T-cell (primary cell): ENCODE measurements at regions of chr16 and their contacts with region 1.

Region 1: DNA sequence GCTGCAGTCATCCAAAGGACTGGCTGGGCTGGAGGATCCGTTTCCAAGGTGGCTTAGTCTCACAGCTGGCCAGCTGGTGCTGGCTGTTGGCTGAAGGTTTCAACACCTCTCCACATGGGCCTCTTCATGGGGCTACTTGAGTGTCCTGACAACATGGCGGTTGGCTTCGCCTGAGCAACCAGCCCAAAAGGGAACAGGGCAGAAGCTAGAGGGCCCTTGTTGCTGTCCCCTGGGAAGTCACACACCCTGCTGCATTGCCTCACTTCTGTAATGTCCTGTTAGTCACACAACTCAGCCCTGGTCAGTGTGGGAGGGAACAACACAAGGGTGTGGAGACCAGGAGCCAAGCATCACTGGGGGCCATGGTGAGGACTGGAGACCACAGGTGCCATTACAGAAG is 36.6 kb downstream of the C16orf78 start:
- DNase-seq: no peak
- ATAC-seq: no peak
- H3K4me3 ChIP-seq: no peak overlapping the region
- H3K4me3 Mint-ChIP-seq: no peak overlapping the region
- H3K27ac ChIP-seq: no peak overlapping the region
- H3K27ac Mint-ChIP-seq: no peak overlapping the region
- H3K4me1 ChIP-seq: no peaks in the 10 kb centered on the region
- H3K4me1 Mint-ChIP-seq: peaks cover 2 to 5% (median 3%) of the 10 kb centered on the region in 3 donors
- H3K27me3 ChIP-seq: peaks cover 0 to 20% of the 10 kb centered on the region in 2 experiments
- H3K27me3 Mint-ChIP-seq: peaks cover 0 to 4% of the 10 kb centered on the region in 2 donors

Region 2: DNA sequence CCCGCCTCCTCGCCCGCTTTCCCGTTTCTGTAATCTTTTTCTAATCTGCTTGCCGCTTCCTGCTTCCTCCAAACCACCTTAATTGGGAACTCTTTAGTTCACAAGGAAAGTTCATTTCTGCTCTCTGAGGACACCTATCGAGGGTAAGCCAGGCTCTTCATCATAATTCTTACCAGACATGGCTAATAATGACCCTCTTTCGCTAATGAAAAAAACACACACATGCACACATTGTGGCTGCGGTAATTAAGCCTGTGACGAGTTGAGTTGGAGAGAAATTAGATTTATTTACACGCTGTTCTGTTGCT is 345.0 kb after region 1 on chr16:
- CTCF ChIA-PET with region 1: no interaction called
- POLR2A ChIA-PET with region 1: interaction called in 1 of 2 experiments, 13 read pairs
- DNase-seq: no peak
- ATAC-seq: no peak
- H3K4me3 ChIP-seq: peak overlapping the region in 1 of 2 donors; percentile 54
- H3K4me3 Mint-ChIP-seq: peak overlapping the region in 1 of 3 donors; percentile 68
- H3K27ac ChIP-seq: no peak overlapping the region
- H3K27ac Mint-ChIP-seq: no peak overlapping the region
- H3K4me1 ChIP-seq: peaks cover 4 to 5% of the 10 kb centered on the region in 2 experiments
- H3K4me1 Mint-ChIP-seq: peaks cover 11 to 13% (median 11%) of the 10 kb centered on the region in 3 donors
- H3K27me3 ChIP-seq: peaks cover 0 to 40% of the 10 kb centered on the region in 2 experiments
- H3K27me3 Mint-ChIP-seq: peaks cover 34 to 53% of the 10 kb centered on the region in 2 donors

Region 3: GRCh38 chr16:49852279-49852678 is 442.1 kb after region 1 on chr16:
- CTCF ChIA-PET with region 1: no interaction called
- POLR2A ChIA-PET with region 1: interaction called in 1 of 2 experiments, 12 read pairs
- DNase-seq: no peak
- ATAC-seq: no peak
- H3K4me3 ChIP-seq: no peak overlapping the region
- H3K4me3 Mint-ChIP-seq: no peak overlapping the region
- H3K27ac ChIP-seq: no peak overlapping the region
- H3K27ac Mint-ChIP-seq: no peak overlapping the region
- H3K4me1 ChIP-seq: peaks cover 0 to 18% of the 10 kb centered on the region in 2 experiments
- H3K4me1 Mint-ChIP-seq: peaks cover under 1 to 5% (median 5%) of the 10 kb centered on the region in 3 donors
- H3K27me3 ChIP-seq: peaks cover 0 to 44% of the 10 kb centered on the region in 2 experiments
- H3K27me3 Mint-ChIP-seq: peaks cover 38 to 48% of the 10 kb centered on the region in 2 donors